HCT116 (cell line): ENCODE measurements at regions of chr17 and their contacts with region 1.

Region 1: DNA sequence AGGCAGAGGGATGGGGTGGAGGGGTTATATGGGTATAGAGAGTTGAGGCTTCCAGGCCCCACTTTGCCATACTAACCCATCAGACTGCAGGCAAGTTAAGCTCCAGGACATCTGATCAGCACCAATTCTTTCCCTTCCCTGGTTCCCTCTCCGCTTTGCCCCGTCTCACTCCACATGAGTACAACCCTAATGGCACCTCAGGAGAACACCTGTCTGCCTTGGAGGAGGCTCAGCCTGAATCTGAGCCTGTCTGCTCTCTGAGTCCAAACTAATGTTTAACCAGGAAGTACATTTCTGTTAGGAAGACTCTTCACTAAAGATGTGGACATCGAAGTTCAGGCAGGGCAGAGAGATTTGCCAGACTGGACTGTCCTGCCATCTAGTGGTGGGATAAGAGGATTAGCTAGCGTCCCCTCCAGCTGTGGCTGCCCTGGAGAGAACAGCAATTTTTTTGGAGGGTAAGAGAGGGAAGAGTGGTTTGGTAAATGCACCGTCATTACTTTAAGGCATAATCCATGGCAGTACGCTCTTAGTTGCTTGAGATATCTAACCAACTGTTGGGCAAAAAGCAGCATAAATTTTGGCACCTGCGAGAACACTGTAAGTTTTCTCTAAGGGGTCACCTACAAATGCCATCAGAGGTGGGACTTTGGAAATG is 29.2 kb upstream of the LRRC75A start:
- DNase-seq: peak; percentile 77
- ATAC-seq: peak; percentile 91
- H3K4me3 ChIP-seq: no peak overlapping the region
- H3K27ac ChIP-seq: no peak overlapping the region; the same call in 1 of the 2 replicates
- H3K4me1 ChIP-seq: peaks cover 16 to 19% of the 10 kb centered on the region in 2 experiments
- H3K27me3 ChIP-seq: no peaks in the 10 kb centered on the region
- CTCF ChIP-seq: peak; percentile 85 to 94 (median 94)
- POLR2A ChIP-seq: no peak
- RAD21 ChIP-seq: peak; percentile 97

Region 2: GRCh38 chr17:16013943-16014407 is 507.2 kb before region 1 on chr17:
- CTCF ChIA-PET with region 1: no interaction called
- POLR2A ChIA-PET with region 1: no interaction called
- RAD21 ChIA-PET with region 1: no interaction called
- intact Hi-C with region 1: no loop called
- DNase-seq: peak; percentile 36
- ATAC-seq: peak; percentile 87
- H3K4me3 ChIP-seq: no peak overlapping the region
- H3K27ac ChIP-seq: no peak overlapping the region
- H3K4me1 ChIP-seq: peaks cover 0 to 3% of the 10 kb centered on the region in 2 experiments; a peak in 1 of 4 replicates
- H3K27me3 ChIP-seq: no peaks in the 10 kb centered on the region
- CTCF ChIP-seq: peak in 2 of 3 experiments; percentile 67 to 69; a peak in 4 of 6 replicates
- POLR2A ChIP-seq: no peak
- RAD21 ChIP-seq: peak; percentile 33; the same call in 1 of the 2 replicates

Region 3: GRCh38 chr17:16363749-16364536 is 157.3 kb before region 1 on chr17:
- CTCF ChIA-PET with region 1: interaction called, 16 read pairs
- POLR2A ChIA-PET with region 1: no interaction called
- RAD21 ChIA-PET with region 1: interaction called in 1 of 2 experiments, 6 read pairs
- intact Hi-C with region 1: loop called (anchors 2 kb)
- DNase-seq: peak; percentile 72
- ATAC-seq: peak; percentile 97
- H3K4me3 ChIP-seq: no peak overlapping the region
- H3K27ac ChIP-seq: no peak overlapping the region
- H3K4me1 ChIP-seq: peaks cover 4 to 8% of the 10 kb centered on the region in 2 experiments; a peak in 2 of 4 replicates
- H3K27me3 ChIP-seq: no peaks in the 10 kb centered on the region
- CTCF ChIP-seq: peak; percentile 92 to 97 (median 96)
- POLR2A ChIP-seq: no peak
- RAD21 ChIP-seq: peak; percentile 85

Region 4: DNA sequence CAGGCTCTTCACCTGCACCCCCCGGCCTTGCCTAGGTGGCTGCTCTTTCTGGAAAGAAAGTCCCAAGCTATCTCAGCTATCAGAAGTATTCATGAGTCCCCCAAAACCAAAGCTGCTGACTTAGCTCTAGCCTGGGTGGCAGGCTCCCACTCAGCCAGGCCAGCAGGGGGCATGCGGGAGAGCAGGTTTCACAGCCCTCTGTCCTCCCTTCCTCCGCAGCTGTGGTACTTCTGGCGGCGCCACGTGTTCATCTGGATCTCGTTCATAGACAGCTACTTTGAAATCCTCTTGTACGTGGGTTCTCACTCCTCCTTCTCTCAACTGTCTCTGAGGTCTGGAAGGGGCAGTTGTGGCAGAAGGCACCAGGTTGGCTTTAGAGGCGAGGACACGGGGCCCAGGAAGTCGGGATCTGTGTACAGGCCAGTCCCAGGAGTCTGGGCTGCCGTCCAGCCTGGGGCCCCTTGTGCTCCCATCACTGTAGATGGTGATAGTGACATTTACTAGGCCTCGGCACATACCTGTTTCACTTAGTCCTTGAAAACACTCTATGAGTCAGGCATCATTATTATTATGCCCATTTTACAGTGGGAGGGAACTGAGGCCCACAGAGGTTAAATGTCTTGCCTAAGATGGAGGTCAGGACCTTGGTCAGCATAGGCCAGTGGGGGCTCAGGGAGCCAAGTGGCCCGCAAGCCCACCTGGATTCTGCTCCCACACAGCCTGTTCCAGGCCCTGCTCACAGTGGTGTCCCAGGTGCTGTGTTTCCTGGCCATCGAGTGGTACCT is 92.9 kb before region 1 on chr17:
- CTCF ChIA-PET with region 1: interaction called, 16 read pairs
- POLR2A ChIA-PET with region 1: no interaction called
- RAD21 ChIA-PET with region 1: no interaction called
- intact Hi-C with region 1: no loop called
- DNase-seq: no peak
- ATAC-seq: peak; percentile 97
- H3K4me3 ChIP-seq: no peak overlapping the region
- H3K27ac ChIP-seq: no peak overlapping the region
- H3K4me1 ChIP-seq: peaks cover 2 to 10% of the 10 kb centered on the region in 2 experiments; a peak in 3 of 4 replicates
- H3K27me3 ChIP-seq: no peaks in the 10 kb centered on the region
- CTCF ChIP-seq: peak; percentile 74 to 93 (median 80)
- POLR2A ChIP-seq: peak; percentile 22
- RAD21 ChIP-seq: no peak; the same call in none of the 2 replicates

Region 5: GRCh38 chr17:16449121-16449570 is 72.1 kb before region 1 on chr17:
- CTCF ChIA-PET with region 1: interaction called, 43 read pairs
- POLR2A ChIA-PET with region 1: interaction called, 6 read pairs
- RAD21 ChIA-PET with region 1: interaction called, 3 to 6 read pairs
- intact Hi-C with region 1: loop called (anchors 1 kb)
- DNase-seq: no peak
- ATAC-seq: no peak
- H3K4me3 ChIP-seq: no peak overlapping the region
- H3K27ac ChIP-seq: no peak overlapping the region
- H3K4me1 ChIP-seq: peaks cover 0 to 27% of the 10 kb centered on the region in 2 experiments; a peak in 2 of 4 replicates
- H3K27me3 ChIP-seq: no peaks in the 10 kb centered on the region
- CTCF ChIP-seq: no peak
- POLR2A ChIP-seq: no peak
- RAD21 ChIP-seq: no peak

Region 6: GRCh38 chr17:16599537-16599936 is 78.3 kb after region 1 on chr17:
- CTCF ChIA-PET with region 1: no interaction called
- POLR2A ChIA-PET with region 1: no interaction called
- RAD21 ChIA-PET with region 1: no interaction called
- intact Hi-C with region 1: no loop called
- DNase-seq: no peak
- ATAC-seq: no peak
- H3K4me3 ChIP-seq: no peak overlapping the region
- H3K27ac ChIP-seq: no peak overlapping the region
- H3K4me1 ChIP-seq: no peaks in the 10 kb centered on the region
- H3K27me3 ChIP-seq: no peaks in the 10 kb centered on the region
- CTCF ChIP-seq: no peak
- POLR2A ChIP-seq: no peak
- RAD21 ChIP-seq: no peak

Region 7: DNA sequence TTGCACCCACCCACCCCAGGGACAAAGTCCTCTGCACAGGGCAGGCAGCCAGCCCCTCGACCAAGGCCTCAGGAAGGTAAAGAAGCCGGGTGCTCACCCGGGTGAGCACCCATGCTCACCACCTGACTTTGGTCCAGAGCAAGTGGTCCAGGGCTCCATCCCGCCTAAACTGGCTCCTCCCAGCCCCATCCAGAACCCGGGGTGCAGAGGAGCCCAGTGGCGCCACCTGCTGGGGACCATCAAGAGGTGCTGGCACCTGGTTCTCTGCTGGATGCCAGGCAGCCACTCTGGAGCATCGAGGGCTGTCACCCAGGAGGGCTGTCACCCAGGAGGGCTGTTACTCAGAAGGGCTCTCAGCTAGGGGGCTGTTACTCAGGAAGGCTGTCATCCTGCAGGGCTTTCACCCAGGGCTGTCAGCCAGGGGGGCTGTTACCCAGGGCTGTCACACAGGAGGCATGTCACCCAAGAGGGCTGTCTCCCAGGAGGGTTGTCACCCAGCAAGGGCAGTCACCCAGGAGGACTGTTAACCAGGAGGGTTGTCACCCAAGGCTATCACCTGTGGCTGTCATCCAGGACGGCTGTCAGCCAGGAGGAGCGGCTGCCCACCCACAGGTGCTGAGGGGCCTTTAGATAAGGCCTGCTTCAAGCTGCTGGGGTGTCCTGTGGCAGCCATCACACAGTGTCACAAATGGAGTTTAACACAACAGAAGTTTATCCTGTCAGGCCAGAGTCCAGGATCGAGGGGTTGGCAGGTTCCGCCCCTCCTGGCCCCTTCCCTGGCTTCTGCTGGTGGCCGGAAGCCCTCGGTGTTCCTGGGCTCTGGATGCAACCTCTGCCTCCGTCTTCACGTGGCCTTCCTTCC is 352.2 kb after region 1 on chr17:
- CTCF ChIA-PET with region 1: no interaction called
- POLR2A ChIA-PET with region 1: no interaction called
- RAD21 ChIA-PET with region 1: no interaction called
- intact Hi-C with region 1: loop called (anchors 10 kb)
- DNase-seq: peak; percentile 45
- ATAC-seq: peak; percentile 98
- H3K4me3 ChIP-seq: no peak overlapping the region
- H3K27ac ChIP-seq: no peak overlapping the region
- H3K4me1 ChIP-seq: peaks cover 0 to 10% of the 10 kb centered on the region in 2 experiments; a peak in 2 of 4 replicates
- H3K27me3 ChIP-seq: no peaks in the 10 kb centered on the region
- CTCF ChIP-seq: peak; percentile 76 to 94 (median 93)
- POLR2A ChIP-seq: no peak
- RAD21 ChIP-seq: peak; percentile 79